Sigmoid colon (tissue), 7 donors: ENCODE measurements at regions of chr1 and their contacts with region 1.

Region 1: GRCh38 chr1:21176586-21177555 is at the start of gene EIF4G3:
- DNase-seq: peak; percentile 99
- H3K4me3 ChIP-seq: peak within 1 kb of the TSS; percentile 65 to 84 (median 81)
- H3K27ac ChIP-seq: peak within 1 kb of the TSS; percentile 90 to 95 (median 94)
- H3K4me1 ChIP-seq: peaks cover 0 to 35% (median 16%) of the 10 kb centered on the region in 4 donors
- H3K27me3 ChIP-seq: no peaks in the 10 kb centered on the region
- CTCF ChIP-seq: no peak
- EP300 ChIP-seq: peak in 1 of 4 donors; percentile 33
- POLR2A ChIP-seq: peak; percentile 42 to 69
- total RNA-seq, gene EIF4G3: 33.3 to 65.9 (median 36.5) TPM

Region 2: DNA sequence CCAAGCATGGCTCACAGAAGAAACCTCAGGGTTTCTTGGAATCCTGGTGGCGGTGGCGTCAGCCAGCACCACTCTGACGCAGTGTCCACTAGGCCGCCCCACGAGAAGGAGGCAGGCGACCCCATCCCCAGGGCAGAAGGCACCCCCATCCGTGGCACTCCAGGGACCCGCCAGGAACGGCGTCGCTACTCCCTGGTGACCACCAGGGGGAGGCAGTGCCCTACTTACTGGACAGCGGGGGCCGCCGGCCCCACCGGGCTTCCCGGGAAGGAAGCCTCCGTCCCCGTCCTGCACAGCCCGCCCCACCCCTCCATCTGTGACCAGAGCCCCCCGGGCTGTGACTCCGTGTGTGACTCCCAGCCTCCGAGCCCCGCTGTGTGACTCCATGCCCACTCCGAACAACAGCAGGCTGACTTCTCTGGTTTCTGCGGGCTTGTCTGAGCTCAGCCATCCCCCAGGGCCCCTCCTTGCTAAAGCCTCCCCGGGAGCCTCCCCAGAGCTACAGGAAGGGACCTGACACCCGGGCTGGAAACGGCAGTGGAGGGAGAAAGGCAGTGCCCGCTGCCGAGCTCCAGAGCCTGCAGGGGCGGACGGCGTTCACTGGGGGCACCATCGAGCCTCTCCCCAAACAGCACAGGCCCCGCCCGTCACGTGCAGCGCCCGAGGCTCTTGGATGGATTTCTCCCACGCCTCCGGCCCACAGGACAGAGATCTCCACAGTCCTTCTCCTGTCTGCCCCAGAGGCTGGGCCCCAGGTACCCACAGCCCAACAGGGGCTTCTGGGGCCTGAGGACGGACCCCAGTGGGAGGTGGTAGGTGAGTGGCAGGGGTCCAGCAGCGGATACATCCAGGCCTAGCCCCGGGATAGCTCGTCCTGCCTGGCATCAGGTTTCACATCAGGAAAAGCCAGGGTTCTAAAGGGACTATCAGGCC is 480.2 kb before region 1 on chr1:
- intact Hi-C with region 1: loop called (anchors 5 kb)
- DNase-seq: peak; percentile 96
- H3K4me3 ChIP-seq: peak overlapping the region; percentile 28 to 62 (median 56)
- H3K27ac ChIP-seq: peak overlapping the region; percentile 80 to 92 (median 88)
- H3K4me1 ChIP-seq: peaks cover 0 to 33% (median 27%) of the 10 kb centered on the region in 4 donors
- H3K27me3 ChIP-seq: no peaks in the 10 kb centered on the region
- CTCF ChIP-seq: peak; percentile 83 to 98 (median 94)
- EP300 ChIP-seq: no peak
- POLR2A ChIP-seq: no peak

Region 3: DNA sequence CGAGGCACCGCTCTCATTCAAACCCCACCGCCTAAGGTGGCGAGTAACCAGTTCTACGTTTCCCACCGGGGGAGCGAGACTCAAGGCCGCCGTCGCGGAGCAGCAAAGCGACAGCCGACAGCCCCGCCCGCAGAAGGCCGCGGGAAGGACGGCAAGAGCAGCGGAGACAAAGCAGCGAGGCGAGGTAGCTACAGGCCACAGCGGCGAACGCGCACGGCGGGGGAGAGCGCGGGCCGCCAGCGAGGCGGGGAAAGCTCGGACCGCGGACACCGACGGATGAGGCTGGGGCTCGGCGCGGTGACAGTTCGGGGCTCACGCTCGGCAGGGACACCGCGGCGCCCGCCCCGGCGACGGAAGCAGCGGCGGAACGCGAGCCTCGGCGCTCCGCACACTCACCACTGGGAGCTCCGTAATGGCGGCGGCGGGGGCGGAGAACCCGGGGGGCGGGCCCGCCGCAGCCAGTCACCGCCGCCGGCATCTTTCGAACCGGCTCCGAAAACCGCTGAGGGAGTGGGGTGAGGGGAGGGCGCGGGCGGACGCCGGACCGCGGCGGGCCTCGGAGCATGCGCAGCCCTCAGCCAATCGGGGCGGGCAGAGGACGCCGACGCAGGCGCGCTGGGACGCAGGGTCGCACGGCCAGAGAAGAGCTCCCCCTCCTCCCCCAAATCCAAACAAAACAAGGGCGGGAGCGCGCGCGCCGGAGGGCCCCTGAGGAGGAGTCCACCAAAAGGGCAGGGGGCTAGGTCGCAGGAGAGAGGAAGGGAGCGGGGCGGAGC is 390.4 kb before region 1 on chr1:
- intact Hi-C with region 1: loop called (anchors 2 kb)
- DNase-seq: peak; percentile 97
- H3K4me3 ChIP-seq: peak overlapping the region; percentile 81 to 98 (median 93)
- H3K27ac ChIP-seq: peak overlapping the region; percentile 96 to 100 (median 99)
- H3K4me1 ChIP-seq: peaks cover 0 to 51% (median 34%) of the 10 kb centered on the region in 4 donors
- H3K27me3 ChIP-seq: no peaks in the 10 kb centered on the region
- CTCF ChIP-seq: no peak
- EP300 ChIP-seq: no peak
- POLR2A ChIP-seq: peak; percentile 62 to 67

Region 4: DNA sequence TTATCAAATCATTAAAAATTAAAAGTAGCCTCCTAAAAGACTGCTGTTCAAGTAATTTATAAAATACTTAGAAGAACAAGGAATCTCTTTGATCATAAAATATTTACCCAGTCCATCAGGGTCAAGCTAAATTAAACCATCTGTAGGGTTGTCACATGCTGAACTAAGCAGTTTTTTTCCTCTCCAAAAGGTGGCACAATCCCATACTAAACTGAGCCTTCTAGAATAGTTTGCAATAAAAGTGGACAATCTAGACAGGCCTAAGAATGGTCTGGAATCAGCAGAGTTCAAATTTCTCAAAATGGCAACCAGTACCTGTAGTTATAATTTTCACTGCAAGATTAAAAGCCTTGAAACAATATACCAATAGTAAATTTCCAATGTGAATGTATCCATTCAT is 195.0 kb before region 1 on chr1:
- intact Hi-C with region 1: loop called (anchors 5 kb)
- DNase-seq: no peak
- H3K4me3 ChIP-seq: no peak overlapping the region
- H3K27ac ChIP-seq: no peak overlapping the region
- H3K4me1 ChIP-seq: peaks cover 0 to 4% (median 0%) of the 10 kb centered on the region in 4 donors
- H3K27me3 ChIP-seq: no peaks in the 10 kb centered on the region
- CTCF ChIP-seq: peak in 1 of 4 experiments; percentile 36
- EP300 ChIP-seq: no peak
- POLR2A ChIP-seq: no peak

Region 5: DNA sequence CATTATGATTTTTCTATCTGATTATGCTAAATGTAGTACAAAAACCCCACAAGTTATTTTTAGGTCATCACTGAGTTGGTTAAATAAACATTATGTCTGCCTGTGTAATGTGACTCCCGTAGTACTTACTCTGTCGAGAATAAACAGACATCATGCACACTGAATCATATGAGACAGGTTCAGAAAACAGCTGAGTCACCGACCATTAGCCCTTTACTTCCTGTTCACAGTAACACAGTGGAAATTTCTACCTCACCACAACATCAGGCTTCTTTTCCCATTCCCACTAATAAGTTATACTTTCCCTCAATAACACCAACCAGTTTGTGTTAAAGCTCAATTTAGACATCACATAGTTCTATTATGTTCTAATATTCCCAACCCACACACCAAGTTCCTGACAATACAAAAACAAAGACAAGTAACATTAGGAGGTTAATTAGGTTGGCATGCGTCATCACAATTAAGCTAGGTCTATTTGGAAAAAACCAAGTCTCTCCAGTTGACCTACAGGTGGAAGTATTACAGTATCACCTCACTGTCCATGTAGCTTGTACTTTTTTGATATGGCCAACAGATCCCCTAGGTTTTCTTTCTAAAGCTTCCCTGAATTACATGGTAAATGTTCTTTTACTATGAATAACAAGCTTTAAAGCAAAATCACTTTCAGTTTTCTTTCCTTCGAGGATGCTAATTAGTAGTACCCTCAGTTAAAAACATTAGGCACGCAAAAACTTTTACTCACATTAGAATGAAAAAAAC is 154.4 kb before region 1 on chr1:
- intact Hi-C with region 1: loop called (anchors 10 kb)
- DNase-seq: peak; percentile 84
- H3K4me3 ChIP-seq: peak overlapping the region in 3 of 4 donors; percentile 6 to 22 (median 16)
- H3K27ac ChIP-seq: peak overlapping the region; percentile 81 to 91 (median 86)
- H3K4me1 ChIP-seq: peaks cover 0 to 47% (median 37%) of the 10 kb centered on the region in 4 donors
- H3K27me3 ChIP-seq: no peaks in the 10 kb centered on the region
- CTCF ChIP-seq: no peak
- EP300 ChIP-seq: peak; percentile 85 to 92 (median 91)
- POLR2A ChIP-seq: no peak